ENCODE measurements at regions of chr22 and their contacts with region 1.

Region 1: GRCh38 chr22:33743756-33744155 is 176.5 kb downstream of the LARGE1 start:
- DNase-seq: no peak
- ATAC-seq: no peak
- H3K4me3 ChIP-seq: no peak overlapping the region
- H3K27ac ChIP-seq: no peak overlapping the region
- H3K4me1 ChIP-seq: peaks cover 16% of the 10 kb centered on the region
- H3K27me3 ChIP-seq: no peaks in the 10 kb centered on the region
- CTCF ChIP-seq: no peak
- EP300 ChIP-seq: no peak
- POLR2A ChIP-seq: no peak
- RAD21 ChIP-seq: no peak

Region 2: GRCh38 chr22:33766091-33766490 is 22.3 kb after region 1 on chr22:
- CTCF ChIA-PET with region 1: no interaction called
- POLR2A ChIA-PET with region 1: no interaction called
- in situ Hi-C with region 1: no loop called
- intact Hi-C with region 1: loop called (anchors 1 kb)
- DNase-seq: no peak
- ATAC-seq: no peak
- H3K4me3 ChIP-seq: no peak overlapping the region
- H3K27ac ChIP-seq: no peak overlapping the region
- H3K4me1 ChIP-seq: no peaks in the 10 kb centered on the region
- H3K27me3 ChIP-seq: no peaks in the 10 kb centered on the region
- CTCF ChIP-seq: no peak
- EP300 ChIP-seq: no peak
- POLR2A ChIP-seq: no peak
- RAD21 ChIP-seq: no peak

Measured in HepG2 (cell line).